Left ventricle myocardium inferior (tissue), 1 donor: ENCODE measurements at regions of chrX and their contacts with region 1.

Region 1: DNA sequence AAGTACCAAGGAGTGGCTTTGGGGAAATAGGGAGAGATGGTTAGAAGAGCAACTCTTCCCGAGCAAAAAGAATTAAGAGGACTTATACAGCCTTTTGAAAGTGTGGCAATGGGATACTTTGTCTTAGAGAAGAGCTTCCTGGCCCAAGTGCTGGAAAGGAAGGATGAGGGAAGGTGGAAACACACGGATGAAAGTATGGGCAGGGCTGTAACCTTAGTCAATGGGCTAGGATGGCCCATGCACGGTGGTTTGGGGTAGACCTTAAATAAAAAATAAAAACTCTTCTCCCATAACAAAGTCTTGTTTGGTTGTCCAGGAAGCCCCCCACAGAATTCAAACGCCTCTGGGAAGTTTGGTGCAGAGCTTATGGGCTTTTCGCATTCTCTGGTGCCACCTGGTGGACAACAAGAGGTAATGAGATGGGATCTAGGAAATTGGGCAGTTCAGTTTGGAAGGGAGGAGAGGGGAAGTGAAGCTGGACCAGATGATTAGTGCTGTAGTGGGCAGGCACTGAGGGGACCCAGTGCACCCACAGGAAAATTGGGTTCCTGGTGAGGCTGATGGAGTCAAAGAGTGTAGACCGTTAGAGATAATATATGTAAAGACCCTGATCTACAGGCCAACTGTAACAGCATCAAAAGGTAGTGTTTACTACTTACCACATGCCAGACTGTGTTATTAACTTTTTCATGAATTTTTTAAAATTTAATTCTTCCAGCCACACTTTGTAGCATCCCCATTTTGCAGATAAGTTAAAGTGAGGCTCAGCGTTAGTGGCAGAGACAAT is 13.8 kb upstream of the ENOX2 start:
- DNase-seq: peak; percentile 12
- H3K4me3 ChIP-seq: no peak overlapping the region
- H3K27ac ChIP-seq: no peak overlapping the region
- H3K4me1 ChIP-seq: no peaks in the 10 kb centered on the region
- H3K27me3 ChIP-seq: no peaks in the 10 kb centered on the region
- CTCF ChIP-seq: peak; percentile 74

Region 2: GRCh38 chrX:130393451-130394074 is 523.3 kb before region 1 on chrX:
- intact Hi-C with region 1: loop called (anchors 10 kb)
- DNase-seq: no peak
- H3K4me3 ChIP-seq: no peak overlapping the region
- H3K27ac ChIP-seq: no peak overlapping the region
- H3K4me1 ChIP-seq: no peaks in the 10 kb centered on the region
- H3K27me3 ChIP-seq: no peaks in the 10 kb centered on the region
- CTCF ChIP-seq: peak; percentile 63

Region 3: GRCh38 chrX:130482871-130483270 is 434.0 kb before region 1 on chrX:
- intact Hi-C with region 1: no loop called
- DNase-seq: no peak
- H3K4me3 ChIP-seq: no peak overlapping the region
- H3K27ac ChIP-seq: no peak overlapping the region
- H3K4me1 ChIP-seq: no peaks in the 10 kb centered on the region
- H3K27me3 ChIP-seq: no peaks in the 10 kb centered on the region
- CTCF ChIP-seq: no peak

Region 4: DNA sequence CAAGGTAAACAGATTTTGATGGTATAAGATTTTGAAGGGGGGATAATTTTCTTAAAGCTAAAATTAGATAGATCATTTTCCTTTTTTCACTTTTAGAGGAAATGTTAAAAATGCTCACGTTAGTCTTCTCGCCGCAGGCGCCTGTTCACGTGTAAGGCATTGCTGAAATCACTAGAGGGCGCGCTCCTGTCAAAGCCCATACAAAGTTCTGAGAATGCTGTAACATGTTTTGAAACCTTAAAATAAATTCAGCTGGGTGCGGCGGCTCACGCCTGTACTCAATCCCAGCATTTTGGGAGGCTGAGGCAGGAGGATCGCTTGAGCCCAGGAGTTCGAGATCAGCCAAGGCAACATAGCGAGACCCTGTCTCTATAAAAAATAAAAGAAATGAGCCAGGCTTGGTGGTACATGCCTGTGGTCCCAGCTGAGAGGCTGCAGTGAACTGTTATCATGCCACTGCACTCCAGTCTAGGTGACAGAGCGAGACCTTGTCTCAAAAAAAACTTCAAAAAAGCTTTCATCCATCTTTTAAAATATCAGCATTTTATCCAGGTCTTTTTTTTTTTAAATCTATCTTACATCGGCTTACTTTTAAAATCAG is 377.0 kb before region 1 on chrX:
- intact Hi-C with region 1: loop called (anchors 5 kb)
- DNase-seq: peak; percentile 18
- H3K4me3 ChIP-seq: no peak overlapping the region
- H3K27ac ChIP-seq: no peak overlapping the region
- H3K4me1 ChIP-seq: no peaks in the 10 kb centered on the region
- H3K27me3 ChIP-seq: no peaks in the 10 kb centered on the region
- CTCF ChIP-seq: peak; percentile 75

Region 5: GRCh38 chrX:130575831-130576389 is 340.9 kb before region 1 on chrX:
- intact Hi-C with region 1: loop called (anchors 10 kb)
- DNase-seq: peak; percentile 15
- H3K4me3 ChIP-seq: no peak overlapping the region
- H3K27ac ChIP-seq: no peak overlapping the region
- H3K4me1 ChIP-seq: no peaks in the 10 kb centered on the region
- H3K27me3 ChIP-seq: no peaks in the 10 kb centered on the region
- CTCF ChIP-seq: peak; percentile 72